CD4-positive, alpha-beta T cell (primary cell): ENCODE measurements at regions of chr20 and their contacts with region 1.

Region 1: GRCh38 chr20:21303061-21303871 is at the start of gene XRN2:
- DNase-seq: peak; percentile 89 to 97 (median 92)
- ATAC-seq: peak; percentile 81
- H3K4me3 ChIP-seq: peak within 1 kb of the TSS; percentile 70
- H3K4me3 Mint-ChIP-seq: peak within 1 kb of the TSS; percentile 99
- H3K27ac ChIP-seq: peak within 1 kb of the TSS; percentile 92 to 96
- H3K27ac Mint-ChIP-seq: peak within 1 kb of the TSS; percentile 99
- H3K4me1 ChIP-seq: peaks cover 8% of the 10 kb centered on the region
- H3K4me1 Mint-ChIP-seq: peaks cover 30% of the 10 kb centered on the region
- H3K27me3 ChIP-seq: no peaks in the 10 kb centered on the region
- H3K27me3 Mint-ChIP-seq: peaks cover 5% of the 10 kb centered on the region
- CTCF ChIP-seq: peak; percentile 30
- total RNA-seq, gene XRN2: 48.5 to 48.9 TPM

Region 2: DNA sequence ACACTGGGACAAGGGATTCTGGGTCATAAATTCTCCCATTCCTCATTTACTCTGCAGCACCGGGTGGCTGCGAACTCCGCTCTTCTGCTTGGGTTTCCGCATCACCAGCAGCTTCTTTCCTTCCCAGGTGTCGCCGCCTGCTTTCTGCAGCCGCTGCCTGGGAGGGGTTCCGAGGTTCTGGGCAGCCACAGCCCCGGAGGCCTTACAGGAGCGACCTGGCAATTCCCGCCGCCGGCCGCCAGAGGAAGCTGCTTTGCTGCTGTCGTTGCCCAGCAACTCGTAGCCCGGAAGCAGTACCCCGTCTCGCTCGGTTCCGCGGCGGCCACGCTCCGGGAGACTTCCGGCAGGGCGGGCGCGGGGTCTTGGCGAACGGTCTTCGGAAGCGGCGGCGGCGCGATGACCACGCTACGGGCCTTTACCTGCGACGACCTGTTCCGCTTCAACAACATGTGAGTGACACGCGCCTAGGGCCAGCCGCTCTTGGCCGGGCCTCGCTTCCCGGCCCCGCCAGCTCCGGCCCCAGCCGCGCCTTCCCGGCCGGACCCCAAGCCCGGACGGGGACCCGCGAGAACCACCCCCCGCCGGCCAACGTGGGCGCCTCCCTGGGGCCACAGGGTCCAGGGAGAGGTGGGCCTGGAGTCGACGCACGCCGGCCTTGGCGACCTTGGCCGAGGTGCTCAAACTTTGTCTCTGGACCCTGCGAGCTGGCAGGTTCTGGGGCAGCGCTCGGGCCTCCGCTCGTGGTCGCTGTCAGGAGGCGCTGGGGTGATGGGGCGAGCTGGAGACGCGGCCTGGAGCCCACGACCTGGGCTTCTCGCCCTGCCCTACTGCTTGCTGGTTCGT is 1286.0 kb before region 1 on chr20 and contains the start of gene NAA20:
- CTCF ChIA-PET with region 1: no interaction called
- POLR2A ChIA-PET with region 1: interaction called, 3 read pairs
- intact Hi-C with region 1: loop called (anchors 5 to 10 kb)
- DNase-seq: peak; percentile 82 to 95 (median 86)
- ATAC-seq: peak; percentile 98
- H3K4me3 ChIP-seq: peak within 1 kb of the TSS; percentile 76
- H3K4me3 Mint-ChIP-seq: peak within 1 kb of the TSS; percentile 95
- H3K27ac ChIP-seq: peak within 1 kb of the TSS; percentile 32 to 47
- H3K27ac Mint-ChIP-seq: peak within 1 kb of the TSS; percentile 88
- H3K4me1 ChIP-seq: peaks cover 38% of the 10 kb centered on the region
- H3K4me1 Mint-ChIP-seq: peaks cover 54% of the 10 kb centered on the region
- H3K27me3 ChIP-seq: no peaks in the 10 kb centered on the region
- H3K27me3 Mint-ChIP-seq: no peaks in the 10 kb centered on the region
- CTCF ChIP-seq: peak; percentile 75
- total RNA-seq, gene NAA20: 18.8 to 18.9 TPM

Region 3: DNA sequence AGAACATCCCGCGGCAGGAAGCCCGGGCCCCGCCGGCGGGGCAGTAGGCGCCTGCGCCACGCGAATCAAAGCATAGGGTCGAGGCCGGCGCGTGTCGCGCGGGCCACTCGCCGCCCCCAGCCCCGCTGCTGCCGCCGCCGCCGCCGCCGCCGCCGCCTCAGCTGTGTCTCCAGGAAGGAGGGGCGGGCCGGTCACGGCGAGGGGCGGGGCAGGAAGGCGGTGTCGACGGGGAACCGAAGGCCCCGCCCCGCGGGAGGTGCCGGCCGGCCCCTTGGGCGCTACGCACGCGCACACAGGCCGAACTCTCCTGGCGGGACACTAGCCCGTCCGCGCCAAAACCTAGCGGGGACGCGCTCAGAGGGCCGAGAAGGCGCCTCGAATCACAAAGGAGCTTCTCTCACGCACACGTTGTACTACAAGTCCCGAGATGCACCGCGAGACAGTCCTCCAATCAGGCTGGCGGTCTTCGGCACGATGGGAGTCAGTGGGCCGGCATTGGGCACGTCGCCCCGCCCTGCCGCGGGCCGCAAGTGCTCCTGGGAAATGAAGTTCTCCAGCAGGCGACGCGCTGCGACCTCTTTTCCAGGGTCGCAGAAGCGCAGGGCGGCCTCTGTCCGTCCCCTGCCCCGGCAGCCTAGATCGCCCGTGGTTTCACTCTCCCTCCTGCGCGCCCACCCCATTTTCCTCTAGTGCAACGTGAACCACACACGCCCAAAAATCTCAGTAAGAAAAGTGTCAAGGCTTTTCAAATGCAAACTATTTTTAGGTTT is 590.6 kb before region 1 on chr20 and contains the start of gene RALGAPA2:
- CTCF ChIA-PET with region 1: no interaction called
- POLR2A ChIA-PET with region 1: interaction called, 9 read pairs
- intact Hi-C with region 1: loop called in 1 of 2 experiments (anchors 2 kb)
- DNase-seq: peak; percentile 89 to 97 (median 94)
- ATAC-seq: peak; percentile 93
- H3K4me3 ChIP-seq: peak within 1 kb of the TSS; percentile 82
- H3K4me3 Mint-ChIP-seq: peak within 1 kb of the TSS; percentile 98
- H3K27ac ChIP-seq: peak within 1 kb of the TSS; percentile 79 to 95
- H3K27ac Mint-ChIP-seq: peak within 1 kb of the TSS; percentile 92
- H3K4me1 ChIP-seq: peaks cover 15% of the 10 kb centered on the region
- H3K4me1 Mint-ChIP-seq: peaks cover 40% of the 10 kb centered on the region
- H3K27me3 ChIP-seq: no peaks in the 10 kb centered on the region
- H3K27me3 Mint-ChIP-seq: peaks cover 5% of the 10 kb centered on the region
- CTCF ChIP-seq: no peak
- total RNA-seq, gene RALGAPA2: 21.2 to 21.9 TPM

Region 4: DNA sequence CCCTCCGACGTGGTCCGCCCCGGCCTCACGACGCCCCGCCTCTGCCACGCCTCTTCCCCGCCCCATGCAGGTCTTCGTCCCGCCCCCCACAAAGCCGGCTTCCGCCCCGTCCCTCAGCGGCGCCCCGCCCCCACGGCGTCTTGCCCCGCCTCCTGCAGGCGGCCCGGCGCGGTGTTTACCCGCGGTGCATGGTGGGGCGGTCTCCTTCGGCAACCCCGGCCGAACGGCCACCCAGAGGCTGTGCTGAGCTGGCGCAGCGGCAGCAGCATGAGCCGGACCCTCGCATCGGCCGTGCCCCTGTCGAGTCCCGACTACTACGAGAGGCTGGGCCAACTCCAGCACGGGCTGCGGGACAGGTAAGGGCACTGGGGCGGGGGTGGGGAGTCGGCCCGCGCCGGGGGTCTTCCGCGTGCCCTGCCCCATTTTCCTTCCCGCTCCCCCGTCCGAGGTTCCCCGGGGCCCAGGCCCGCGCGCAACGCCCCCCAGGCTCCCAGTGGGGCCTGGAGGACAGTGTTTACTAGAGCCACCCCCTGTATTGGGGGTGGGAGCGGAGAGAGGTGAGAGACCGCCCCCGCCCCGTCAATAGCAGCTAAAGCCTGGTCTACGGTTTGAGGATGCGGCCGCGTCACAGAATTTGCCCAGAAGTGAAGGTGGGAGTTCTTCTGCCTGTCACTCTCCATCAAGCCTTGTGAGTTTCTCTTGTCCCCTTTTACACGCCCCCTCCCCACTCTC is 177.3 kb before region 1 on chr20 and contains the start of gene KIZ:
- CTCF ChIA-PET with region 1: no interaction called
- POLR2A ChIA-PET with region 1: interaction called, 5 read pairs
- intact Hi-C with region 1: loop called (anchors 2 kb)
- DNase-seq: peak; percentile 91 to 99 (median 97)
- ATAC-seq: peak; percentile 93
- H3K4me3 ChIP-seq: peak within 1 kb of the TSS; percentile 78
- H3K4me3 Mint-ChIP-seq: peak within 1 kb of the TSS; percentile 88
- H3K27ac ChIP-seq: peak within 1 kb of the TSS; percentile 28 to 42
- H3K27ac Mint-ChIP-seq: peak within 1 kb of the TSS; percentile 74
- H3K4me1 ChIP-seq: peaks cover 14% of the 10 kb centered on the region
- H3K4me1 Mint-ChIP-seq: peaks cover 32% of the 10 kb centered on the region
- H3K27me3 ChIP-seq: no peaks in the 10 kb centered on the region
- H3K27me3 Mint-ChIP-seq: peaks cover 4% of the 10 kb centered on the region
- CTCF ChIP-seq: peak; percentile 24
- total RNA-seq, gene KIZ: 31.1 to 33.8 TPM

Region 5: GRCh38 chr20:21214431-21214830 is 88.8 kb before region 1 on chr20:
- CTCF ChIA-PET with region 1: no interaction called
- POLR2A ChIA-PET with region 1: no interaction called
- intact Hi-C with region 1: no loop called
- DNase-seq: no peak
- ATAC-seq: no peak
- H3K4me3 ChIP-seq: no peak overlapping the region
- H3K4me3 Mint-ChIP-seq: no peak overlapping the region
- H3K27ac ChIP-seq: no peak overlapping the region
- H3K27ac Mint-ChIP-seq: no peak overlapping the region
- H3K4me1 ChIP-seq: no peaks in the 10 kb centered on the region
- H3K4me1 Mint-ChIP-seq: no peaks in the 10 kb centered on the region
- H3K27me3 ChIP-seq: no peaks in the 10 kb centered on the region
- H3K27me3 Mint-ChIP-seq: no peaks in the 10 kb centered on the region
- CTCF ChIP-seq: no peak

Region 6: DNA sequence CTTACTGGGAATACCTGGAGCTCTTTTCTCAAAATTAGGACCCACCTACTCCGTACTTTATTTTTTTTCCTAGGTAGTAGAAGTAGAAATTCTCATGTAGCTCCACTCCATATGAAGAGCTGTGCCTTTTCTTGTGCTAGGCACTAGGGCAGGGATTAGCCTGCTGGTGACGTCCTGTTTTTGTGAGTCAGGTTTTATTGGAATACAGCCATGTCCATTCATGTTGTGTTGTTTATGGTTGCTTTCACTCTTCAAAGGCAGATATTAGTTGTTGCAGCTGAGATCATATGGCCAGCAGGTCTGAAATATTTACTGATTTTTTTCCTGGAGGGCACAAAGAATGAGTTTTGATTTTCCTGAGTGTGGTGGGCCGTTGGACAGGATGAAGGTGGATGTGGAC is 20.4 kb after region 1 on chr20:
- CTCF ChIA-PET with region 1: interaction called, 3 read pairs
- POLR2A ChIA-PET with region 1: interaction called, 12 read pairs
- intact Hi-C with region 1: no loop called
- DNase-seq: no peak
- ATAC-seq: no peak
- H3K4me3 ChIP-seq: no peak overlapping the region
- H3K4me3 Mint-ChIP-seq: peak overlapping the region; percentile 5
- H3K27ac ChIP-seq: no peak overlapping the region
- H3K27ac Mint-ChIP-seq: peak overlapping the region; percentile 23
- H3K4me1 ChIP-seq: peaks cover 17% of the 10 kb centered on the region
- H3K4me1 Mint-ChIP-seq: peaks cover 74% of the 10 kb centered on the region
- H3K27me3 ChIP-seq: no peaks in the 10 kb centered on the region
- H3K27me3 Mint-ChIP-seq: no peaks in the 10 kb centered on the region
- CTCF ChIP-seq: no peak

Region 7: DNA sequence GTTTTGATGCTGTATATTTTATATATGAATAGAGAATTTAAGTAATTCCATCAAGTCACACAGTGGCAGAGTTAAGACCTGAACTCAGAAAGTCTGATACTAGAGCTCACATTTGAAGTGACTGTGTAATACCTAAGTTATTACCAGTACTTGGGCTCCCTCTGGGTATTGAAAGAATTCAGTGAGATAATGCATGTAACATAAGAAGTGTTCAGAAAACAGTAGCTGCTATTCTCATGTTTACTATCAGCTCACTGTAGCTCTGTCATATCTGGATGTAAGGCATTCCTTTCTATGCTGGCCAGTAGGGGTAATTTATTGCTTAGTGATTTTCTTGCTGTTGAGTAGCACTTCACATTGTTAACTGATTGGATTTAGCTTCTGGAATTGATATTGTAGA is 49.4 kb after region 1 on chr20:
- CTCF ChIA-PET with region 1: interaction called, 3 read pairs
- POLR2A ChIA-PET with region 1: no interaction called
- intact Hi-C with region 1: loop called in 1 of 2 experiments (anchors 10 kb)
- DNase-seq: no peak
- ATAC-seq: no peak
- H3K4me3 ChIP-seq: no peak overlapping the region
- H3K4me3 Mint-ChIP-seq: no peak overlapping the region
- H3K27ac ChIP-seq: no peak overlapping the region
- H3K27ac Mint-ChIP-seq: no peak overlapping the region
- H3K4me1 ChIP-seq: no peaks in the 10 kb centered on the region
- H3K4me1 Mint-ChIP-seq: no peaks in the 10 kb centered on the region
- H3K27me3 ChIP-seq: no peaks in the 10 kb centered on the region
- H3K27me3 Mint-ChIP-seq: no peaks in the 10 kb centered on the region
- CTCF ChIP-seq: no peak

Region 8: GRCh38 chr20:21395666-21396598 is 92.7 kb after region 1 on chr20:
- CTCF ChIA-PET with region 1: no interaction called
- POLR2A ChIA-PET with region 1: interaction called, 5 read pairs
- intact Hi-C with region 1: loop called (anchors 5 kb)
- DNase-seq: peak in 12 of 14 experiments; percentile 12 to 83 (median 46)
- ATAC-seq: peak; percentile 89
- H3K4me3 ChIP-seq: no peak overlapping the region
- H3K4me3 Mint-ChIP-seq: peak overlapping the region; percentile 74
- H3K27ac ChIP-seq: no peak overlapping the region
- H3K27ac Mint-ChIP-seq: peak overlapping the region; percentile 35
- H3K4me1 ChIP-seq: peaks cover 16% of the 10 kb centered on the region
- H3K4me1 Mint-ChIP-seq: peaks cover 27% of the 10 kb centered on the region
- H3K27me3 ChIP-seq: peaks cover 34 to 85% of the 10 kb centered on the region in 2 experiments
- H3K27me3 Mint-ChIP-seq: peaks cover 81% of the 10 kb centered on the region
- CTCF ChIP-seq: no peak

Region 9: GRCh38 chr20:21411725-21412124 is 108.5 kb after region 1 on chr20:
- CTCF ChIA-PET with region 1: no interaction called
- POLR2A ChIA-PET with region 1: no interaction called
- intact Hi-C with region 1: no loop called
- DNase-seq: no peak
- ATAC-seq: no peak
- H3K4me3 ChIP-seq: no peak overlapping the region
- H3K4me3 Mint-ChIP-seq: no peak overlapping the region
- H3K27ac ChIP-seq: no peak overlapping the region
- H3K27ac Mint-ChIP-seq: no peak overlapping the region
- H3K4me1 ChIP-seq: peaks cover 11% of the 10 kb centered on the region
- H3K4me1 Mint-ChIP-seq: no peaks in the 10 kb centered on the region
- H3K27me3 ChIP-seq: peaks cover 7 to 12% of the 10 kb centered on the region in 2 experiments
- H3K27me3 Mint-ChIP-seq: peaks cover 77% of the 10 kb centered on the region
- CTCF ChIP-seq: no peak

Region 10: GRCh38 chr20:21808863-21809664 is 505.8 kb after region 1 on chr20:
- CTCF ChIA-PET with region 1: no interaction called
- POLR2A ChIA-PET with region 1: no interaction called
- intact Hi-C with region 1: no loop called
- DNase-seq: peak in 8 of 14 experiments; percentile 1 to 36 (median 12)
- ATAC-seq: no peak
- H3K4me3 ChIP-seq: no peak overlapping the region
- H3K4me3 Mint-ChIP-seq: no peak overlapping the region
- H3K27ac ChIP-seq: no peak overlapping the region
- H3K27ac Mint-ChIP-seq: no peak overlapping the region
- H3K4me1 ChIP-seq: no peaks in the 10 kb centered on the region
- H3K4me1 Mint-ChIP-seq: no peaks in the 10 kb centered on the region
- H3K27me3 ChIP-seq: no peaks in the 10 kb centered on the region
- H3K27me3 Mint-ChIP-seq: peaks cover 4% of the 10 kb centered on the region
- CTCF ChIP-seq: peak; percentile 63